ENCODE measurements at regions of chrX and their contacts with region 1.

Region 1: GRCh38 chrX:53211391-53211978 is 13.5 kb downstream of the KDM5C start:
- DNase-seq: no peak
- ATAC-seq: no peak
- H3K4me3 ChIP-seq: no peak overlapping the region
- H3K27ac ChIP-seq: no peak overlapping the region
- H3K4me1 ChIP-seq: no peaks in the 10 kb centered on the region
- H3K27me3 ChIP-seq: no peaks in the 10 kb centered on the region
- CTCF ChIP-seq: no peak

Region 2: GRCh38 chrX:51598899-51599298 is 1612.6 kb before region 1 on chrX:
- CTCF ChIA-PET with region 1: interaction called, 10 read pairs
- POLR2A ChIA-PET with region 1: no interaction called
- in situ Hi-C with region 1: no loop called
- intact Hi-C with region 1: no loop called
- DNase-seq: no peak
- ATAC-seq: no peak
- H3K4me3 ChIP-seq: no peak overlapping the region
- H3K27ac ChIP-seq: no peak overlapping the region
- H3K4me1 ChIP-seq: no peaks in the 10 kb centered on the region
- H3K27me3 ChIP-seq: no peaks in the 10 kb centered on the region
- CTCF ChIP-seq: no peak

Region 3: DNA sequence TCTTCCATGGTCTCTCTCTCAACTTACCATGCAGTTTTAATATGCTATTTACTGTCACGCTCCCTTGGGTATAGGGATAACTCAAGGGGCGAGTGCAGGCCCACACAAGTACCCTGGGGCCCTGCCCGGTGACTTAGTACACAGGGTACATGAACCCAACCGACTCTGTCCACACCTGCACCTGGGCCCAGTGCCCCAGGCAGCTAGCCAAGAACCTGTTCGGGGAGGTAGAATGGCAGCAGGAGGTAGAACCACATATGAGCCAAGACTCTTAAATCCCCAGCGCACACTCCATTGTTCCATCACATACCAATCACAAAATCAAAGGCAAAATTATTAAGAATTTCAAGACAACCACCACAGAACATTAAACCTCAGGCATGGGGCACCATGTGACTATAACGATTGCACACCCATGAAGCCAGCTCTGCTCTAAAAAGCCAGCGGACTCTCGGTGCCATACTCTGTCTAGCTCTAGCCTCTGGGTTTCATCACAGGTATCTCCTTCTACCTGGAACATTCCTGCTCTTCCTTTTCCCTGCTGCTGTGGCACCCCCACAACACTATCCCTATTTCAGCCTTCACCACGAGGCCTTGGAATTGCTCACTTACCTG is 818.2 kb after region 1 on chrX:
- CTCF ChIA-PET with region 1: interaction called, 15 read pairs
- POLR2A ChIA-PET with region 1: no interaction called
- in situ Hi-C with region 1: no loop called
- intact Hi-C with region 1: no loop called
- DNase-seq: no peak
- ATAC-seq: no peak
- H3K4me3 ChIP-seq: no peak overlapping the region
- H3K27ac ChIP-seq: no peak overlapping the region
- H3K4me1 ChIP-seq: no peaks in the 10 kb centered on the region
- H3K27me3 ChIP-seq: no peaks in the 10 kb centered on the region
- CTCF ChIP-seq: no peak